ENCODE measurements at regions of chr7 and their contacts with region 1.

Region 1: GRCh38 chr7:158829342-158830210 is at the start of gene ESYT2:
- DNase-seq: peak; percentile 100
- H3K4me3 ChIP-seq: peak within 1 kb of the TSS; percentile 78 to 89
- H3K27ac ChIP-seq: peak within 1 kb of the TSS; percentile 88 to 97
- H3K4me1 ChIP-seq: peaks cover 5 to 7% of the 10 kb centered on the region in 2 experiments; a peak in 2 of 4 replicates
- H3K27me3 ChIP-seq: no peaks in the 10 kb centered on the region
- CTCF ChIP-seq: peak; percentile 47
- EP300 ChIP-seq: peak; percentile 10 to 55; a peak in 1 of 4 replicates
- RAD21 ChIP-seq: peak; percentile 41
- polyA plus RNA-seq, gene ESYT2: 34.2 and 42.7 TPM in 2 replicates

Region 2: GRCh38 chr7:158704704-158705468 is 124.7 kb before region 1 on chr7 and contains the start of gene NCAPG2:
- CTCF ChIA-PET with region 1: no interaction called
- POLR2A ChIA-PET with region 1: interaction called, 13 read pairs
- DNase-seq: peak; percentile 100
- H3K4me3 ChIP-seq: peak within 1 kb of the TSS; percentile 91 to 99
- H3K27ac ChIP-seq: peak within 1 kb of the TSS; percentile 43 to 91
- H3K4me1 ChIP-seq: peaks cover 13 to 29% of the 10 kb centered on the region in 2 experiments; a peak in 3 of 4 replicates
- H3K27me3 ChIP-seq: no peaks in the 10 kb centered on the region
- CTCF ChIP-seq: no peak
- EP300 ChIP-seq: no peak; a peak in 1 of 4 replicates
- RAD21 ChIP-seq: no peak; the same call in 1 of the 2 replicates
- polyA plus RNA-seq, gene NCAPG2: 25.0 and 27.6 TPM in 2 replicates